ENCODE measurements at regions of chr1 and their contacts with region 1.

Region 1: DNA sequence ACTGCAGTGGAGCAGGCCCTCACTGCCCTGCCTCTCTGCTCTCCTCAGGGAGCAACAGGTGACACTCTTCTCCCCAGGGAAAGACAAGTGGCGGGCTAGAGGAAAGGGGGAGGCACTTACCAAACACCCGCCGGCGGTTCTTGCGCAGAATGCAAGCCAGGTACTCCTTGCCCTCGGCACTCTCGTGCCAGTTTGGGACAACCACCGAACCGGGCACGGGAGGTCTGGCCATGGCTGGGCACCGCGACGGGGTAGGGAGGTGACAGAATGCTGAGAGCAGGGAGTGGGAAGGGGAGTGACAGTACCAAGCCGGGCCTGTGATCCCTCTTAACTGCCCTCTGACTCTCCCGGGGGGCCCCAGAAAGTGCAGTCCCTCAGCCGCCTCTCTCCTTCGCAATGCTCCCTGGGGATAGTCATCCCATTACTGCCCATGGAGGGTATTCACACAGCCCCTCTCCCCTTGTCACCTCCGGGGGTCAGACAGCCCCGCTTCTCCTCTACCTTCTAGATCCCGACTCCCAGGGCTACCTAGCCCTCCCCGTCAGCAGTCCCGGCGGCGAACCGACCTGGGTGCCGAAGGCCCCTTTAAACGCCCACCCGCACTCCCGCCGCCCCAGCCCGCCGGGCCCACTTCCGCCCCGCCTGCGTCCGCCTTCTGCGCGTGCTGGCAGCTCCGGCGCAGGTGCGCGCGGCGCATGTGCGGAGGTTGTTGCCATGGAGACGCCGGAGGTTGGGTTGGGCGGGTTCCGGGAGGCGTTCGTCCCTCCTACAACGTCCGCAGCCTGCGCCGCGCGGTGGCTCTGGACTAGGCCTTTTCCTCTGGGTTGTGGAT is at the start of gene CPLANE2:
- DNase-seq: peak; percentile 97
- ATAC-seq: peak; percentile 88
- H3K4me3 Mint-ChIP-seq: peak within 1 kb of the TSS; percentile 80
- H3K27ac Mint-ChIP-seq: 0 out of 2 replicates have a peak within 1 kb of the TSS, but pooled peaks have one; percentile 68
- H3K4me1 Mint-ChIP-seq: peaks cover 15% of the 10 kb centered on the region
- H3K27me3 Mint-ChIP-seq: no peaks in the 10 kb centered on the region; the same call in 1 of the 2 replicates
- CTCF ChIP-seq: no peak
- total RNA-seq, gene CPLANE2: 3.9 to 5.0 TPM (median 4.9 TPM) in 3 replicates

Region 2: DNA sequence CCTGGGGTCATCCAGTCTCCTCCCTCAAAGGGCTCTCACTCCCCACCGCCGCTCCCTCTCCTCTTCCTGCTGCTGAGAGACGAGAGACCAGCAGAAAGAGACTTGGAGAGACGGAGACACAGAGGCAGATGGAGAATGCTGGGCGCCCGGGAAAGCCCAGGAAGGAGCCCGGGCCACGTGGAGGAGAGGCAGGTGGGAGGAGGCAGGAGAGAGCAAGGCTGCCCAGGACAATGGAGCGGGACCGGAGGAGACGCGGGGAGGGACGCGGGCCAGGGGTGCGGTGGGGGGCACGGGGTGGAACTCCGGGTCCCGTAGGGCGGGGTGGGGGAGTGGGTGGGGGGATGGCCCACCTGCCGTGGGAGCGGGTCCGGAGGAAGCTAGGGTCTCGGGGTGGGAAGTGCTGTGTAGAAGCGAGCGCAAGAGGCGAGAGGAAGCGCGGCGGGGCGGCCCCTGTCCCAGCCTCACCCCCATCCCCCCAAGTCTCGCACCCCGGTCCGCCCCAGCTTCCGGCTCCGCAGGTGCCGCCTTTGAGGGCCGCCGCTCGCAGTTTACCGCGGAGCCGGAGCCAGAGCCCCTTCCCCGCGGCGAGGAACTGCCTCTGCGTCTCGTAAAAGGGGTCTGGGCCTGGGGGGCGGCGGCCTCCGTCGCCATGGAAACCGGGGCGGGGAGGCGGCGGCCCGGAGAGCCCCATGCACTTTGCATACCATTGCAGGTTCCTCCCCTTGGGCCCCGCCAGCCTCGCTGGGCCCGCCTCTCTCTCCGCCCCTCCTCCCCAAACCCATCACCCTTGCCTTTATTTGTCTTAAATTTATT is 69.2 kb before region 1 on chr1:
- CTCF ChIA-PET with region 1: no interaction called
- POLR2A ChIA-PET with region 1: no interaction called
- DNase-seq: peak; percentile 89
- ATAC-seq: peak; percentile 80
- H3K4me3 Mint-ChIP-seq: peak overlapping the region; percentile 69
- H3K27ac Mint-ChIP-seq: no peak overlapping the region
- H3K4me1 Mint-ChIP-seq: peaks cover 48% of the 10 kb centered on the region
- H3K27me3 Mint-ChIP-seq: no peaks in the 10 kb centered on the region
- CTCF ChIP-seq: no peak

Region 3: GRCh38 chr1:16226490-16227179 is 10.1 kb before region 1 on chr1:
- CTCF ChIA-PET with region 1: interaction called, 13 read pairs
- POLR2A ChIA-PET with region 1: no interaction called
- DNase-seq: peak; percentile 91
- ATAC-seq: peak; percentile 89
- H3K4me3 Mint-ChIP-seq: peak overlapping the region; percentile 79
- H3K27ac Mint-ChIP-seq: no peak overlapping the region
- H3K4me1 Mint-ChIP-seq: peaks cover 23% of the 10 kb centered on the region
- H3K27me3 Mint-ChIP-seq: peaks cover 61% of the 10 kb centered on the region
- CTCF ChIP-seq: no peak

Measured in WTC11 (cell line).